HEK293 (cell line): ENCODE measurements at regions of chr7 and their contacts with region 1.

Region 1: GRCh38 chr7:2451171-2452073 is 24.8 kb downstream of the GRIFIN start:
- H3K4me3 ChIP-seq: no peak overlapping the region
- H3K27ac ChIP-seq: no peak overlapping the region
- H3K4me1 ChIP-seq: no peaks in the 10 kb centered on the region
- CTCF ChIP-seq: peak; percentile 86

Region 2: GRCh38 chr7:2411815-2412586 is 39.4 kb before region 1 on chr7:
- CTCF ChIA-PET with region 1: interaction called, 10 read pairs
- POLR2A ChIA-PET with region 1: interaction called, 6 read pairs
- H3K4me3 ChIP-seq: no peak overlapping the region
- H3K27ac ChIP-seq: no peak overlapping the region
- H3K4me1 ChIP-seq: peaks cover 29% of the 10 kb centered on the region
- CTCF ChIP-seq: no peak

Region 3: GRCh38 chr7:2440608-2441245 is 10.7 kb before region 1 on chr7:
- CTCF ChIA-PET with region 1: interaction called, 14 read pairs
- POLR2A ChIA-PET with region 1: no interaction called
- H3K4me3 ChIP-seq: no peak overlapping the region
- H3K27ac ChIP-seq: no peak overlapping the region
- H3K4me1 ChIP-seq: no peaks in the 10 kb centered on the region
- CTCF ChIP-seq: no peak

Region 4: DNA sequence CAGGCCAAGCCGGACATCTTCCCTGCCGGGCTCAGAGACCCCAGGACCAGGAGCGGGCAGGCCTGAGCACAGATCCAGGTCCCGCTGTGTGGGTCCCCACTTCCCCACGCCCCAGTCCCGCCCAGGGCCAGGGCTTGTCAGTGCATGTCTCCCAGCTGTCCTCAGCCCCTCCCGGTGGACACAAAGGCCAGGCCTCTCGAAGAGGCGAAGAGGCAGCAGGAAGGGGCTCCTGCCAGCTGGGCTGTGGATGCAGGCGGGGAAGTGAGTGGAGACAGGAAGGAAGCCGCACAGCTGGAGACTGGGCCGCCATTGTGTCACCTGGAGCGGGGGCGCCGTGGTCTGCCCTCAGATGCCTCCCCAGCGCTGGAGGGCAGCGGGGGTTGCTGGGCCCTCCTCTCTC is 20.0 kb after region 1 on chr7:
- CTCF ChIA-PET with region 1: interaction called, 106 read pairs
- POLR2A ChIA-PET with region 1: interaction called, 4 read pairs
- H3K4me3 ChIP-seq: no peak overlapping the region
- H3K27ac ChIP-seq: 0 out of 2 replicates have a peak overlapping the region, but pooled peaks have one; percentile 3
- H3K4me1 ChIP-seq: no peaks in the 10 kb centered on the region
- CTCF ChIP-seq: no peak

Region 5: GRCh38 chr7:2495418-2496299 is 44.2 kb after region 1 on chr7:
- CTCF ChIA-PET with region 1: no interaction called
- POLR2A ChIA-PET with region 1: no interaction called
- H3K4me3 ChIP-seq: no peak overlapping the region
- H3K27ac ChIP-seq: no peak overlapping the region
- H3K4me1 ChIP-seq: no peaks in the 10 kb centered on the region
- CTCF ChIP-seq: no peak

Region 6: GRCh38 chr7:2680792-2681490 is 229.5 kb after region 1 on chr7:
- CTCF ChIA-PET with region 1: interaction called, 10 read pairs
- POLR2A ChIA-PET with region 1: no interaction called
- H3K4me3 ChIP-seq: no peak overlapping the region
- H3K27ac ChIP-seq: no peak overlapping the region
- H3K4me1 ChIP-seq: no peaks in the 10 kb centered on the region
- CTCF ChIP-seq: peak; percentile 50

Region 7: GRCh38 chr7:2709553-2710285 is 258.3 kb after region 1 on chr7:
- CTCF ChIA-PET with region 1: interaction called, 28 read pairs
- POLR2A ChIA-PET with region 1: no interaction called
- H3K4me3 ChIP-seq: no peak overlapping the region
- H3K27ac ChIP-seq: no peak overlapping the region
- H3K4me1 ChIP-seq: no peaks in the 10 kb centered on the region
- CTCF ChIP-seq: peak; percentile 79